Activated CD4-positive, alpha-beta T cell treated with anti-CD3 and anti-CD28 coated beads for 36 hours (primary cell): ENCODE measurements at regions of chr16 and their contacts with region 1.

Region 1: GRCh38 chr16:84116720-84117493 is at the start of gene MBTPS1:
- DNase-seq: peak; percentile 99
- ATAC-seq: peak; percentile 93
- H3K4me3 Mint-ChIP-seq: peak within 1 kb of the TSS; percentile 80
- H3K27ac Mint-ChIP-seq: peak within 1 kb of the TSS; percentile 95
- H3K4me1 Mint-ChIP-seq: peaks cover 31% of the 10 kb centered on the region
- H3K27me3 Mint-ChIP-seq: no peaks in the 10 kb centered on the region
- total RNA-seq, gene MBTPS1: 32.0 to 32.2 TPM

Region 2: DNA sequence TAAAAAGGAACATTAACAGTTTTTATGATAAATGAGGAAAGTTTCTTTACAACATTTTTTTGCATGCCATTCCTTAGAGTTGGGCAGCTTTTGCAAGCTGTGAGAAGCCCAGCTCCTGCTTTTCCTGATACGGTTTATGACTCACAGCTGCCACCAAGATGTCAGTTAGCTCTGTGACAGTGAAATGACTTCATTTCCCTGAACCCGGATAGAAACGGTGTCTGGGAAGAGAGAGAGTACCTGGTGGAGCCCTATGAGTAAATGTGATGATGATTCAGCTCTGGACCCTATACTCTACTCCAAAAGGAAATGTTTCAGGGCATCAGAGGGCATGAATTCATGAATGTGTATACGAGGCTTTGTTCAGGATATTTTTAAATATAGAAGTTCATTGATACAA is 675.4 kb before region 1 on chr16:
- CTCF ChIA-PET with region 1: no interaction called
- POLR2A ChIA-PET with region 1: no interaction called
- intact Hi-C with region 1: no loop called
- DNase-seq: no peak
- ATAC-seq: no peak
- H3K4me3 Mint-ChIP-seq: no peak overlapping the region
- H3K27ac Mint-ChIP-seq: no peak overlapping the region
- H3K4me1 Mint-ChIP-seq: no peaks in the 10 kb centered on the region
- H3K27me3 Mint-ChIP-seq: peaks cover 3% of the 10 kb centered on the region

Region 3: DNA sequence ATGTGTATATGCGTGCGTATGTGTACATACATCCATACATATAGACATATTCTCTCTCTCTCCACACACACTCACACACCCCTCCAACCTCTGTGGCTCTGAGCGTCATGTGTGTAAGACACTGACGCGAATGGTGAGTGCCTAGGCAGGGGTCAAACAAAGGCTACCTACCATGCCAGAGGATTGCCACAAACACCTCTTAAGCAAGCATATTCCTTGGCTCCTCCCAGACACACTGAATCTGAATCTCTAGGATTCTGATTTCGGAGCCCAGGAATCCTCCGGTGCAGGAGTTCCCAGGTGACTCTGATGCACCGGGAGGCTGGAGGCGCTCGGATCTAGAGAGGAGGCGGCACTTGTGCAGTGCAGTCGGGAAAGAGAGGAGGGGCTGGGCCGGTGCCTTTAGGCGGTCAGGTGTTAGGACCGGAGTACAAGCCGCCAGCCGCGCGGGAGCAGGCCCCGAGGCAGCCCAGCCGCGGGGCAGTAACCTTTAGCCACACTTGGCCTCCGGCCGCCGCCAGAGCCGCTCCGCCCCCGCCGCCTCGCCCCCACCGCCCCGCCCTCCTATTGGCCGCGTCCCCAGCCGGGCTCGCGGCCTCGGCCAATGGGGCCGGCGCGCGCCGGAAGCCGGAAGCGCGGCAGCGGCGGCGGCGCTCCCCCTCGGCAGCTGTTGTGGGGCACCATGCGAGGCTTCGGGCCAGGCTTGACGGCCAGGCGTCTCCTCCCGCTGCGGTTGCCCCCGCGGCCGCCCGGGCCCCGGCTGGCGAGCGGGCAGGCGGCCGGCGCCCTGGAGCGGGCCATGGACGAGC is 218.2 kb before region 1 on chr16 and contains the start of gene MLYCD:
- CTCF ChIA-PET with region 1: interaction called, 3 read pairs
- POLR2A ChIA-PET with region 1: no interaction called
- intact Hi-C with region 1: loop called in 1 of 2 experiments (anchors 1 kb)
- DNase-seq: peak; percentile 82
- ATAC-seq: peak; percentile 95
- H3K4me3 Mint-ChIP-seq: peak within 1 kb of the TSS; percentile 96
- H3K27ac Mint-ChIP-seq: peak within 1 kb of the TSS; percentile 83
- H3K4me1 Mint-ChIP-seq: peaks cover 28% of the 10 kb centered on the region
- H3K27me3 Mint-ChIP-seq: peaks cover 3% of the 10 kb centered on the region
- total RNA-seq, gene MLYCD: 3.3 to 3.8 TPM

Region 4: DNA sequence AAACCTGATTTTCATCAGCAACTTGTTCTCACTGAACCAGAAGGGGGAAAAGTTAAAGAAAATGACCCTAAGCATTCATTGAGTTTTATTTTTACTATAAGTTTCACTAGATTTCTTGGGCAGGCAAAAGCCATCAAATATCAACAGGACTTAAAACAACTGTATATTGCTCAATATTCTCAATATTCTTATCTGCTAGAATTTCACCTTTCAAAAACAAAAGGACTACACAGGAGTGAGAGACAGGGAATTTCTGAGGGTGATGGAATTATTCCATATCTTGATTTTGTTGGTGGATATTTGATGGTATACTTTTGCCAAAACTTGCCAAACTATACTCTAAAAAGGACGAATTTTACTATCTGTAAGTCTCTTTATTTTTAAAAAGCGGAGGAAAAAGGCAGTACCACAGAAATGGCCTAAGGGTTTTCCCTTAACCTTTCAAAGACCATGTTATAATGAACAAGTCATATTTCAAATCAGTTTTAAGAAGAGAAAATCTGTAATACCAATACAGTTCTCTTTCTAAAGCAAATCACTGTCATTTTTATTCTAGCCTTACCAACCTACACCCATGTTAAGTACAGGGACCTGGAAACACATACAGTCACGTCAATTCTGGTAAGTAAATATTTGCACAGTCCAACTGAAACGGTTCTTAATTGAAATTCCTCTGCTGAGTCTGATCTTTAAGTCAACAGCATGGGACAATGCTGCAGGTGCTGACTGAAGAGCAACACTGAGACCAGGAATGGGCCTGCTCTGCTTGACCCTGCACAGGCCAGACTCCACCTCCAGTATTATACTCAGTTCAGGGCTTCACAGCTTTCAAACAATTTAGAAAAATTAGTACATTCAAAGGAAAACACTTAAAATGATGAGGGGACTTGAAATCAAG is 20.5 kb before region 1 on chr16:
- CTCF ChIA-PET with region 1: interaction called, 14 read pairs
- POLR2A ChIA-PET with region 1: no interaction called
- intact Hi-C with region 1: loop called in 1 of 2 experiments (anchors 1 kb)
- DNase-seq: no peak
- ATAC-seq: no peak
- H3K4me3 Mint-ChIP-seq: no peak overlapping the region
- H3K27ac Mint-ChIP-seq: no peak overlapping the region
- H3K4me1 Mint-ChIP-seq: peaks cover 21% of the 10 kb centered on the region
- H3K27me3 Mint-ChIP-seq: no peaks in the 10 kb centered on the region

Region 5: GRCh38 chr16:84175350-84176081 is 58.6 kb after region 1 on chr16:
- CTCF ChIA-PET with region 1: interaction called, 16 read pairs
- POLR2A ChIA-PET with region 1: no interaction called
- intact Hi-C with region 1: loop called in 1 of 2 experiments (anchors 2 kb)
- DNase-seq: peak; percentile 81
- ATAC-seq: peak; percentile 93
- H3K4me3 Mint-ChIP-seq: no peak overlapping the region
- H3K27ac Mint-ChIP-seq: no peak overlapping the region
- H3K4me1 Mint-ChIP-seq: peaks cover 19% of the 10 kb centered on the region
- H3K27me3 Mint-ChIP-seq: peaks cover 2% of the 10 kb centered on the region